BJ (cell line): ENCODE measurements at regions of chr10 and their contacts with region 1.

Region 1: DNA sequence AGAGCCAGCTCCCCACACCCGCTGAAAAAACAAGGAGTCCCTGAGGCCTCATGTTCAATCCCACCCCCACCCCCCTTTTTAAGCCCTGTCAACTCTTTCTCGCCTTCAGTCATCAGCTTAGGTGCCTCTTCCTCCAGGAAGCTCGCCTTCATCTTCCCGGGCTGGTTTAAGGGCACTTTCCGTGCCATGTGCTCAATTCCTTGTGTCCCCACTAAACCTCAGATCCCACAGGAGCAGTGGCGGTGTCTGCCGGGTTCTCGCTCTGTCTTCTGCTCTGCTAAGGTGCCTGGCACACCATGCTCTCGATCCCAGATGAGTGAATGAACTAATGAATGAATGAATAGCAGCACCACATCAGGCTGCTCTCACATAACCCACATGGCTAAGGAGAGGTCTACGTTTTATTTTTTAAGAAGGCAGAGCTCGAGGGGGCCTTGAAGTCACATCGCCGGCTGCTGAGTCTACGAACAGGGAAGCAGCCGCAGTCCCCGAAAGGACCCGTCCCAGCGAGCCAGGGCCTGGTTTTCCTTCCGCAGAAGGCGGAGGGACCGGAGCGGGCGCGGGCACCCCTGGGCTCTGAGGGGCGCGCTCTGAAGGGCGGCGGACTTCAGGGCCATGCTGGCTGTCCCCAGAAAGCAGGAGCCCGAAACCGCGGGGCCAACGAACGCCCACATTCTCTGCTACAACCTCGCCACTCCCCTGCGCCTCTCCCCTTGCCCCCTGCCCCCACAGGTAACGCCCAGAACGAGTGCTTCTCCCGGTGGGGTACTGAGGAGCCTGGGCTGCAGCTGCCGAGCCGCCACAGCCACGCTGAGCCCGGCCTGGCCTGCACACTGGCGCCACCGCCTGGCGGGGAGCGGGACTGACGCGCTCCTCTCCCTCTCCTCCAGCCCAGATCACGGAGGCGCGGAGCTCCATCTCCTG is 73.4 kb upstream of the KCNMA1 start:
- DNase-seq: no peak
- H3K4me3 ChIP-seq: peak overlapping the region; percentile 38
- H3K27me3 ChIP-seq: no peaks in the 10 kb centered on the region
- CTCF ChIP-seq: peak; percentile 99

Region 2: DNA sequence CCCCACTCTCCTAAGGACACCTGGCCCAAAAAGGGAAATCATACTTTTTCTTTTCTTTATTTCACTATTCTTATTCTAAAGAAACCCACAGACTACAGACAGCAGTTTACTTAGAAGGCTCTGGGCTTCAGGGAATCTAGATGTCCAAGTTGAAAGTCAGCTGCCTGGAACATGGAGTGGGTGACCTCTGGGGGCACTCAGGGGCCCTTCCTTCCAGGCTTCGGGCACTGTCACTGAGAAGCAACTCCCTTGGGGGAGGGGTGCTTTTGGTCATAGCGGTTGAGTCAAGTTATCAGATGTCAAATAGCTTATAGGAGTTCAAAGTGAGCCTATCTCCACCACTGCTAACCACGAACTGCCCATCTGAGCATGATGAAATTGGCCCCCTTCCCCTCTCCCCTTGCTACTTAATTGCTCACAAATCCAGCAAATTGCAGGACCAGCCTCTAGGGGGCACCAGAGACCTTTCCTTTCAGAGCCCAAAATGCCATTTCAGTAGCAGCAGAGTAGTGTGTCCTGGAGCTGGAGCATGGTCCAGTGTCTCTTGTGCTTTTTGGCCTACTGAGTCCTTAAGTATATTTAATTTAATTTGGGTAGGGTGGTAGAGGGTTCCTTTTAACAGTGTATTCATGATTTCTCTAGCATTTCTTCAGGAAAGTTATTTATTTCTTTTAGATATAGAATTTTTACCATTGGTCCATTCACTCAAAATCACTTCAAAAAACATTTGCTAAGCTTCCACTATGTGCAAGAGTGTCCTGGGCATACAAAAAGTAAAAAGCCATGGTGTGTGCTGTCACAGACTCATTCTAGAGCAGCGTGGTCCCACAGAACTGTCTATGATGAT is 537.2 kb before region 1 on chr10:
- CTCF ChIA-PET with region 1: interaction called, 110 read pairs
- POLR2A ChIA-PET with region 1: no interaction called
- DNase-seq: no peak
- H3K4me3 ChIP-seq: no peak overlapping the region
- H3K27me3 ChIP-seq: no peaks in the 10 kb centered on the region
- CTCF ChIP-seq: peak; percentile 88

Region 3: GRCh38 chr10:77664008-77664407 is 47.0 kb before region 1 on chr10:
- CTCF ChIA-PET with region 1: interaction called, 11 read pairs
- POLR2A ChIA-PET with region 1: no interaction called
- DNase-seq: no peak
- H3K4me3 ChIP-seq: no peak overlapping the region
- H3K27me3 ChIP-seq: peaks cover 3% of the 10 kb centered on the region; the same call in 1 of the 2 replicates
- CTCF ChIP-seq: no peak

Region 4: DNA sequence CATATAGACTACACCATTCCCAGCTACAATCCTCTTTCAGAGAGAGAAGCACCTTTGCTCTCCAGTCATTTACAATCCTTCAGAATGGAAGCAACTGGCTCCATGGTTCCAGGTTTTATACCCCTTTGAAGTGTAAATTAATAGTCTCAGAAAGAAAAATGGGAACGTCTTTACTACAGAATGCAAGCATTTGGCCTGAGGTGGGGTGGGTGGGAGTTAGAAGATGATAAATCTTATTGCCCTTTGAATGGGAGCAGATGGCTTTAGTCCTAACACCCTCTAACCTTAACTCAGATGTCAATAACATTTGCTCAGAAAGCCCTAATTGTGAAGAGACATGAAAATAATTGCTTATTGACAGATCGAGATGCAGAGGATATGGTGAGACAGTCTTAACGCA is 10.8 kb after region 1 on chr10:
- CTCF ChIA-PET with region 1: interaction called, 60 read pairs
- POLR2A ChIA-PET with region 1: no interaction called
- DNase-seq: no peak
- H3K4me3 ChIP-seq: no peak overlapping the region
- H3K27me3 ChIP-seq: no peaks in the 10 kb centered on the region
- CTCF ChIP-seq: no peak

Region 5: DNA sequence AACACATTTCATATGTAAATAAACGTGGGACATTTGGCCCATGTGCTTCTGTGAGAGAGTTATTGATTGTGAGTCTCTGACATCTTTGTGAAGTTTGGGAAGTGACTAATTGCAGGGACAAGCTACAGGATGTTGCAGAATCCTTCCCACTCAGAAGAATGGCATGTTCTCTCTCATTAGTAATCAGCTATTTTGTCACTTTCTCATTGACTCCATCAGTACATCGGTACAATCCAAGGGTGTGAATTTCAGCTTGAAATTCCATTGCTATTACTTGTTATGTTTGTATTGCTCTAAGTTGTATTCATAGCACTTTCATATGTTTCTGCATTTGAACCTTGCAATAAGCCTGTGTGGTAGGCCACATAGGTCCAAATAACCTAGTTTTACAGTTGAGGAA is 26.6 kb after region 1 on chr10:
- CTCF ChIA-PET with region 1: interaction called, 15 read pairs
- POLR2A ChIA-PET with region 1: no interaction called
- DNase-seq: peak; percentile 91
- H3K4me3 ChIP-seq: no peak overlapping the region
- H3K27me3 ChIP-seq: no peaks in the 10 kb centered on the region
- CTCF ChIP-seq: no peak

Region 6: GRCh38 chr10:77756319-77757232 is 45.6 kb after region 1 on chr10:
- CTCF ChIA-PET with region 1: interaction called, 149 read pairs
- POLR2A ChIA-PET with region 1: no interaction called
- DNase-seq: no peak
- H3K4me3 ChIP-seq: no peak overlapping the region
- H3K27me3 ChIP-seq: no peaks in the 10 kb centered on the region
- CTCF ChIP-seq: peak; percentile 82